Activated CD4-positive, alpha-beta T cell treated with anti-CD3 and anti-CD28 coated beads for 36 hours (primary cell): ENCODE measurements at regions of chr12 and their contacts with region 1.

Region 1: GRCh38 chr12:10749700-10750384 is 26.7 kb upstream of the YBX3 start:
- DNase-seq: peak; percentile 79
- ATAC-seq: peak; percentile 97
- H3K4me3 Mint-ChIP-seq: peak overlapping the region; percentile 46
- H3K27ac Mint-ChIP-seq: peak overlapping the region; percentile 49
- H3K4me1 Mint-ChIP-seq: peaks cover 9% of the 10 kb centered on the region
- H3K27me3 Mint-ChIP-seq: peaks cover 28% of the 10 kb centered on the region

Region 2: GRCh38 chr12:10235761-10236631 is 513.8 kb before region 1 on chr12:
- CTCF ChIA-PET with region 1: no interaction called
- POLR2A ChIA-PET with region 1: no interaction called
- intact Hi-C with region 1: loop called (anchors 1 kb)
- DNase-seq: peak; percentile 57
- ATAC-seq: no peak
- H3K4me3 Mint-ChIP-seq: no peak overlapping the region
- H3K27ac Mint-ChIP-seq: no peak overlapping the region
- H3K4me1 Mint-ChIP-seq: no peaks in the 10 kb centered on the region
- H3K27me3 Mint-ChIP-seq: peaks cover 11% of the 10 kb centered on the region

Region 3: GRCh38 chr12:10634427-10634826 is 115.4 kb before region 1 on chr12:
- CTCF ChIA-PET with region 1: no interaction called
- POLR2A ChIA-PET with region 1: no interaction called
- intact Hi-C with region 1: no loop called
- DNase-seq: no peak
- ATAC-seq: no peak
- H3K4me3 Mint-ChIP-seq: no peak overlapping the region
- H3K27ac Mint-ChIP-seq: no peak overlapping the region
- H3K4me1 Mint-ChIP-seq: no peaks in the 10 kb centered on the region
- H3K27me3 Mint-ChIP-seq: peaks cover 2% of the 10 kb centered on the region

Region 4: DNA sequence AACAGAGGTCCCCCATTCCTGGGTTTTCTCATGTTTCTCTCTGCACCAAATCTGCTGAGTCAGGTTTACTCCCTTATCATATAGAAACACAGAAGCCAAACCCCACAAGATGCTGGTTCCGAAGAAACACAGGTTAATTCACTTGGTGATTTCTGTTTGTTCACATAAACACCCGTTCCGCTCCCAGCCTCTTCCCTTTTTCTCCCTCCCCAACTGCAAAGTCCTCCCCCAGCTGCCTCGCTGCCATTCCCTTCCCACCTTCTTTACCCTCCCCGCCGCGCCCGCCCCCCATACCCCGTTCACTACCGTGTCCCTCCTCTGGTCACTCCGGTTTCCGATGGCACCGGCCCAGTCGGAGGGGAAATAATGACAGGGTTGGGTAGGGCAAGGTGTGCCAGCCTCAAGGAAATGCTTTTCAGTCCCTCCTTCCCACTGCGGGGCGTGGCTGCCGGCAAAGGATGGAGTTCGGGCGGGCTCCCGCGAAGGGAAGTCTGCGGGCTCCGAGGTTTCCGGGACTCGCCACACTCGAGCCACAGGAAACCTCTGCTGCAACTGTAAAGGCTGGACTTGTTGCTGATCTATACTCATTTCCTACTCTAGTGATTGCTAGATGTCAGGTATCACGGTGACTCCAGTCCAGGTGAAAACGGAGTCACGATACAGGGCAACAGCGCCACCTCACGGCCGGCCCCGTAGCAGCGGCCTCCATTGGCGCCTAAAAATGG is 76.0 kb before region 1 on chr12 and contains the start of gene STYK1:
- CTCF ChIA-PET with region 1: interaction called, 4 read pairs
- POLR2A ChIA-PET with region 1: no interaction called
- intact Hi-C with region 1: loop called in 1 of 2 experiments (anchors 1 kb)
- DNase-seq: peak; percentile 84
- ATAC-seq: peak; percentile 89
- H3K4me3 Mint-ChIP-seq: peak within 1 kb of the TSS; percentile 70
- H3K27ac Mint-ChIP-seq: peak within 1 kb of the TSS; percentile 77
- H3K4me1 Mint-ChIP-seq: peaks cover 28% of the 10 kb centered on the region
- H3K27me3 Mint-ChIP-seq: peaks cover 56% of the 10 kb centered on the region
- total RNA-seq, gene STYK1: not detected

Region 5: GRCh38 chr12:10726940-10727339 is 22.9 kb before region 1 on chr12:
- CTCF ChIA-PET with region 1: interaction called, 14 read pairs
- POLR2A ChIA-PET with region 1: no interaction called
- intact Hi-C with region 1: loop called in 1 of 2 experiments (anchors 1 kb)
- DNase-seq: no peak
- ATAC-seq: no peak
- H3K4me3 Mint-ChIP-seq: no peak overlapping the region
- H3K27ac Mint-ChIP-seq: no peak overlapping the region
- H3K4me1 Mint-ChIP-seq: peaks cover 4% of the 10 kb centered on the region
- H3K27me3 Mint-ChIP-seq: peaks cover 31% of the 10 kb centered on the region

Region 6: GRCh38 chr12:10771132-10771733 is 21.4 kb after region 1 on chr12:
- CTCF ChIA-PET with region 1: interaction called, 16 read pairs
- POLR2A ChIA-PET with region 1: no interaction called
- intact Hi-C with region 1: no loop called
- DNase-seq: no peak
- ATAC-seq: no peak
- H3K4me3 Mint-ChIP-seq: no peak overlapping the region
- H3K27ac Mint-ChIP-seq: no peak overlapping the region
- H3K4me1 Mint-ChIP-seq: no peaks in the 10 kb centered on the region
- H3K27me3 Mint-ChIP-seq: peaks cover 33% of the 10 kb centered on the region

Region 7: GRCh38 chr12:11408096-11408495 is 658.3 kb after region 1 on chr12:
- CTCF ChIA-PET with region 1: no interaction called
- POLR2A ChIA-PET with region 1: no interaction called
- intact Hi-C with region 1: no loop called
- DNase-seq: no peak
- ATAC-seq: no peak
- H3K4me3 Mint-ChIP-seq: no peak overlapping the region
- H3K27ac Mint-ChIP-seq: no peak overlapping the region
- H3K4me1 Mint-ChIP-seq: no peaks in the 10 kb centered on the region
- H3K27me3 Mint-ChIP-seq: no peaks in the 10 kb centered on the region